ENCODE measurements at regions of chr6 and their contacts with region 1.

Region 1: DNA sequence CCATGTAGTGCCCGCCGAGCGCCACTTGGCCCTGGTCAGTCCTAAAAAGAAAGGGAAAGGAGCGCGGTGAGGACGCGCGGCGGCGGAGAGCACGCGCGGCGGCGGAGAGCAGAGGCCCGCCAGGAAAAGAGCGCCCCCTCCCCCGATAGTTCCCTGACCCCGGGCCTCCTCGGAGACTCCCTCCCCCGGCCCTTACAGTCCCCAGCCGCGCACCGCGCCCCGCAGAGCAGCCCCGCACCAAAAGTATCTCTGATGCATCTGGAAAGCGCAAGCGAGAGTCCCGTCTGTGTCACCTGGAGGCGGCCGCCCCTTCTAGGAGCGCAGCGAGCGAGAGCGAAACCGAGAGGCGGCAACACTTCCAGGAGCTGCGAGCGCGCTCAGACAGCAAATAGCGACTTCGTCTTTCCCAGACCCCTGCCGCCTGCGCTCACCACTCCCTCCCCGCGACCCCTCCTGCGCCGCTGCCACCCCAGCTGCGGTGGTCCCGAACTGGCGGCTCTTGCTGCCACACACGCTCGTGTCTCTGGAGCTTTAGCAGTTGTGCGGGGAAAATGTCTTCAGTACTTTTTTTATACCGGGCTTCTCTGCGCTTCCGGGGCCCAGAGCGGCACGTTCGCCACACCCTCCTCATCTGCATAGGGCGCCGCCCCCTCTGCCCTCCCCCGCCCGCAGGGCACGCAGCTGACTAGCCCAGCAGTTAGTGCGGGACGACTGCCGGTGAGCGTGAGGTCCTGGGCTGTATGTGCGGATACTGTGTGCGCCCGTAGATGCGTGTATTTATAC is at the start of gene TENT5A:
- DNase-seq: no peak
- ATAC-seq: peak; percentile 93
- H3K4me3 ChIP-seq: peak within 1 kb of the TSS; percentile 61
- H3K27ac ChIP-seq: no peak within 1 kb of the TSS
- H3K4me1 ChIP-seq: no peaks in the 10 kb centered on the region
- H3K27me3 ChIP-seq: peaks cover 0 to 10% of the 10 kb centered on the region in 2 experiments
- CTCF ChIP-seq: no peak
- EP300 ChIP-seq: no peak
- POLR2A ChIP-seq: peak; percentile 58
- RAD21 ChIP-seq: no peak
- polyA plus RNA-seq, gene TENT5A: 0.40 to 0.53 TPM

Region 2: GRCh38 chr6:80214436-80215022 is 1537.8 kb before region 1 on chr6:
- CTCF ChIA-PET with region 1: no interaction called
- POLR2A ChIA-PET with region 1: no interaction called
- RAD21 ChIA-PET with region 1: no interaction called
- SMC1A ChIA-PET with region 1: interaction called, 3 read pairs
- in situ Hi-C with region 1: no loop called
- intact Hi-C with region 1: loop called (anchors 10 kb)
- DNase-seq: no peak
- ATAC-seq: peak; percentile 94
- H3K4me3 ChIP-seq: no peak overlapping the region
- H3K27ac ChIP-seq: no peak overlapping the region
- H3K4me1 ChIP-seq: peaks cover 3% of the 10 kb centered on the region
- H3K27me3 ChIP-seq: no peaks in the 10 kb centered on the region
- CTCF ChIP-seq: peak; percentile 70 to 74 (median 72)
- EP300 ChIP-seq: no peak
- POLR2A ChIP-seq: no peak
- RAD21 ChIP-seq: peak; percentile 82

Region 3: DNA sequence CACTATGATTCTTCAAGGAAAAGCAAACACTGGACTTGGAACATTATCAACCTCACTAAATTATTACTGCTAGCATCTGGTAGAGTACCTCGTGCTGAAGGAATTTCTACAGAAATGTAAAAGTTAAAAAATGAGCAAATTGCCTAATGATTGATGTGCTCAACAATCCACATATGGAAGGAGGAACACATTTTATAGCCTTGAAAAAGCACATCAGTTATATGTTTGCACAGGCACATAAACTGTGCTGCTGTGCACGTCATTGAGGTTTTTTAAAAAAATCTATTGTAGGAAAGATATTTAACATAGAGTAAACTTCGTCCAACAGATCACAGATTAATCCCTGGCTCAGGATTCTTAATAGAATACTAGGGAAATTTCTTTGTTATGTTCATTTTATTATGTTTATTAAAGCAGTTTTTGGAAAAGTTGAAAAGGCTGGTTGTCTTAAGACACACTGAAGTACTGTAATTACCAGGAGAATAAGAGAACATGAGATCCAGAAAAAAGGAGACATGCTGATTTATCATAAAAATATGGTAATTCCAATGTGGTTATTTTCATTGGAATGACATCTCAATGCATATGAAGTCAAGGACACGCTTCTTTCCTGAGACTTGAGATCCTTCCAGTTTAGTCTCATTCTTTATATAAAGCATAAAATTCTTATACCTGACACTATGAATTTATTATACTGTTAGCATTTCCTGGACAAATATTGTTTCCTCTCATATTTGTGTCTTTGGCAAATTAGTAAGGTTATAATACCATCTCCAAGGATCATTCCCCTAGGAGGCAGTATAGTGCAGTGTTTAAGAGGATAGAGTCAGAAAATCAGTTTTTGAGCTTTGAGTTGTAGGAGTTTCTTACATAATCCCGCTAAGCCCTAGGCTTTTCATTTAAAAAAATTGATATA is 510.9 kb before region 1 on chr6:
- CTCF ChIA-PET with region 1: interaction called, 10 read pairs
- POLR2A ChIA-PET with region 1: no interaction called
- RAD21 ChIA-PET with region 1: interaction called, 9 read pairs
- SMC1A ChIA-PET with region 1: interaction called, 3 read pairs
- in situ Hi-C with region 1: no loop called
- intact Hi-C with region 1: no loop called
- DNase-seq: no peak
- ATAC-seq: no peak
- H3K4me3 ChIP-seq: no peak overlapping the region
- H3K27ac ChIP-seq: no peak overlapping the region
- H3K4me1 ChIP-seq: no peaks in the 10 kb centered on the region
- H3K27me3 ChIP-seq: no peaks in the 10 kb centered on the region
- CTCF ChIP-seq: peak in 2 of 3 experiments; percentile 5 to 30; a peak in 1 of 6 replicates
- EP300 ChIP-seq: no peak
- POLR2A ChIP-seq: no peak
- RAD21 ChIP-seq: peak; percentile 37

Region 4: GRCh38 chr6:81384921-81385320 is 367.4 kb before region 1 on chr6:
- CTCF ChIA-PET with region 1: no interaction called
- POLR2A ChIA-PET with region 1: no interaction called
- RAD21 ChIA-PET with region 1: no interaction called
- SMC1A ChIA-PET with region 1: no interaction called
- in situ Hi-C with region 1: no loop called
- intact Hi-C with region 1: no loop called
- DNase-seq: no peak
- ATAC-seq: no peak
- H3K4me3 ChIP-seq: no peak overlapping the region
- H3K27ac ChIP-seq: no peak overlapping the region
- H3K4me1 ChIP-seq: no peaks in the 10 kb centered on the region
- H3K27me3 ChIP-seq: no peaks in the 10 kb centered on the region
- CTCF ChIP-seq: no peak
- EP300 ChIP-seq: no peak
- POLR2A ChIP-seq: no peak
- RAD21 ChIP-seq: no peak

Region 5: DNA sequence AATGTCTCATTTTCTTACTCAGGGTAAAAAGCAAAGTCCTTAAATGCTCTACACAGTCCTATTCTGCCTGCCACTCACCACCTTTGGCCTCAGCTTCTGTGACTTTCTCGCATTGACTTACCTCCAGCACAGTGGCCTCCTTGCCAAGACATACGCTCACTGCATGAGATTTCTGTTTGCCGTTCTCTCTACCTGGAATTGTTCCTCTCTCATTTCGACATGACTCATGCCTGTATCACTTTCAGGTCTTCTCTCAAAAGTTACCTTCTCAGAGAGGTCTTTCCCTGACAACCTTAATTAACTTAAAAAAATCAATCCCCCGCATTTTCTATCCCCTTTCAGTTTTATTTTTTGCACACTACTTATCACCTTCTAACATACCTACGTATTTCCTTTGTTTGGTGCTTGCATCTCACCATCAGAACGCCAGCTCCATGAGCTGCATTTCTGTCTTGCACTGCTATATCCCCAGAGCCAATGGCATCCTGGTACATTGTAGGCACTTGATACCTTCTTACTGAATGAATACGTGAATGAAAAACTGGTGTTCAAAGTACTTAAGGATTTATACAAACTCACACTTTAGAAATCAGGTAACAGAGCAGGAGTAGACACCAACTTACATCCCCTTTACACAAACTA is 24.3 kb before region 1 on chr6:
- CTCF ChIA-PET with region 1: interaction called, 5 read pairs
- POLR2A ChIA-PET with region 1: interaction called, 7 read pairs
- RAD21 ChIA-PET with region 1: interaction called, 15 read pairs
- SMC1A ChIA-PET with region 1: interaction called, 13 read pairs
- in situ Hi-C with region 1: no loop called
- intact Hi-C with region 1: no loop called
- DNase-seq: peak; percentile 20
- ATAC-seq: peak; percentile 84
- H3K4me3 ChIP-seq: no peak overlapping the region
- H3K27ac ChIP-seq: no peak overlapping the region
- H3K4me1 ChIP-seq: no peaks in the 10 kb centered on the region
- H3K27me3 ChIP-seq: no peaks in the 10 kb centered on the region
- CTCF ChIP-seq: no peak
- EP300 ChIP-seq: no peak
- POLR2A ChIP-seq: no peak
- RAD21 ChIP-seq: no peak

Region 6: GRCh38 chr6:81766482-81767069 is 14.2 kb after region 1 on chr6:
- CTCF ChIA-PET with region 1: interaction called, 8 read pairs
- POLR2A ChIA-PET with region 1: interaction called, 4 read pairs
- RAD21 ChIA-PET with region 1: interaction called, 10 read pairs
- SMC1A ChIA-PET with region 1: interaction called, 10 read pairs
- in situ Hi-C with region 1: no loop called
- intact Hi-C with region 1: no loop called
- DNase-seq: no peak
- ATAC-seq: peak; percentile 36
- H3K4me3 ChIP-seq: no peak overlapping the region
- H3K27ac ChIP-seq: no peak overlapping the region
- H3K4me1 ChIP-seq: no peaks in the 10 kb centered on the region
- H3K27me3 ChIP-seq: no peaks in the 10 kb centered on the region
- CTCF ChIP-seq: no peak
- EP300 ChIP-seq: no peak
- POLR2A ChIP-seq: no peak
- RAD21 ChIP-seq: no peak

Region 7: DNA sequence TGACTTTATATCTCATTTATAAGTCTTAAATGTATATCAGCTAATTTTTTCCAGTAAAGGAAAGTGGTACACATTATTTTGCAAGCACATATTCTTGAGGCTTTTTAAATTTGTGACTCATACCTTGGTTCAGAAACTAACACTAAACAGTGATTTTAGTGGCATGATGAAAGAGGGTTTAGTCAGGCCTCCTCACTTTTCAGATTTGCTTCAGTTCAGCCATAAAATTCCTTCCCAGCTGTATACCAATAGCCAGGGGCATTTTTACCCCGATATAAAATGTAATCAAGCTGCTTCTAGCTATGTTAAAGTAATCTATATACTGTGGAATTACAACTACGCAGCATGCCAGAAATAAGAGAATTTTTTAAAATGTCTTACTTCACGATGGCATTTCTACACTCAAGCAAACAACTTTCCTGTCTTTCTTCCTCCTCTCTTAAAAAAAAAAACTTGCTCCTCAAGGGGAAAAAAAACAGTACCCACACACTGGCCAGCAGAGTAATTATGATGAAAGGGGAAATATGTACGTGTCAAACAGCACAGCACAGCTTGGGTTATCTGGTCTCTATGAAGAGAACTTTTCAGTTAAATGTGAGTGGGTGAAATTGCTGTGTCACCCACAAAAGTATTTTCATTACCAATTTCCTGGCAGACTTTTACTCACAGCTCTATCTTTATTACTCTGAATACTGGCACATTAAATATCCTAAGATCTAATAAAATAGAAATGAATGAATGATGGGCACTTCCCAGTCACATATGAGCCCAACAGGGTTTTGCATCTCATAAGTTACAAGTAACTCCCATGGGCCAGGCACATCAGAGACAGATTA is 245.0 kb after region 1 on chr6:
- CTCF ChIA-PET with region 1: interaction called, 6 read pairs
- POLR2A ChIA-PET with region 1: no interaction called
- RAD21 ChIA-PET with region 1: interaction called, 28 read pairs
- SMC1A ChIA-PET with region 1: interaction called, 4 read pairs
- in situ Hi-C with region 1: no loop called
- intact Hi-C with region 1: no loop called
- DNase-seq: peak; percentile 57
- ATAC-seq: peak; percentile 74
- H3K4me3 ChIP-seq: no peak overlapping the region
- H3K27ac ChIP-seq: no peak overlapping the region
- H3K4me1 ChIP-seq: peaks cover 5% of the 10 kb centered on the region
- H3K27me3 ChIP-seq: no peaks in the 10 kb centered on the region
- CTCF ChIP-seq: no peak
- EP300 ChIP-seq: peak; percentile 37 to 63; a peak in 2 of 4 replicates
- POLR2A ChIP-seq: no peak
- RAD21 ChIP-seq: no peak

Measured in GM12878 (cell line).